ENCODE measurements at regions of chr2 and their contacts with region 1.

Region 1: GRCh38 chr2:230781130-230781797 is 68.6 kb downstream of the CAB39 start:
- DNase-seq: peak; percentile 89
- ATAC-seq: peak; percentile 88
- H3K4me3 ChIP-seq: peak overlapping the region in 1 of 2 experiments; percentile 44; a peak in 3 of 4 replicates
- H3K27ac ChIP-seq: peak overlapping the region; percentile 69
- H3K4me1 ChIP-seq: peaks cover 66 to 94% of the 10 kb centered on the region in 2 experiments
- H3K27me3 ChIP-seq: no peaks in the 10 kb centered on the region
- CTCF ChIP-seq: no peak
- POLR2A ChIP-seq: no peak
- RAD21 ChIP-seq: no peak

Region 2: DNA sequence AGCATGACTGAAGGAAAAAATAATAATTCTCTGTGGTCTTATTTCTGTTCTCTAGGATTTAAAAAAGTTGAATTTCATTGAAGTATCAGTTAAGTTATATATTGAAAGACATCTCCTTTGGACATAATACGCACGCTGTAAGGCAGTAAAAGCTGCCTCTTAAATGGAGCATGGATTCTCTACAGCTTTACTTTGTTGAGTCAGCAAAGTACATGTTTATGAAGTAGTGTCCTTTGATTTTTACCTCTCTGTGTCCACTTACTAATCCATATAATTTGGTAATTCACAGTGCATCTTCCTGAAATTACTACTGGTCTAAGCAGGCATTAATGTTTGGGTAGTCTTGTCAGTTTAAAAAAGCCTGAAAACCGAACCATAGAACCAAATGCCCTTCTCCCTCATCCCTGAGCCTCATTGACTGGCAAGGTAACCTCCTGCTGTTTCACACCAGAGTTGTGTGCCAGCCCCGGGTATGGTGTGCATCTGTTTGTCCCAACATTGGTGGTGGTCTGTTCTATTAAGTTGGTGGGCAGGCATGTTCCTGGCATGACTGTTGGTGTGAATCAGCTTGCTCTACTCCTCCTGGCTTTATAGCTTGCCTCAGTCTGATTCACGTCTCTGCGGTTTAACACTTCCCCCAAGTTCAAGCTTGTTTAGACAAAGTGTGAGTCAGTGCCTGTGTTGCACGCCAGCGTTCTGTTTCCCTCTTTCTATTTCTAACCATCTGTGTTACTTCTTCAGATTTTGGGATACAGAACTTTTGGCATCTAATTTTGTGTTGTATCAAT is 12.5 kb after region 1 on chr2:
- CTCF ChIA-PET with region 1: interaction called, 7 read pairs
- POLR2A ChIA-PET with region 1: interaction called, 18 read pairs
- RAD21 ChIA-PET with region 1: interaction called in 1 of 2 experiments, 4 read pairs
- intact Hi-C with region 1: loop called (anchors 2 kb)
- DNase-seq: peak; percentile 95
- ATAC-seq: peak; percentile 94
- H3K4me3 ChIP-seq: peak overlapping the region; percentile 3 to 34; a peak in 2 of 4 replicates
- H3K27ac ChIP-seq: peak overlapping the region; percentile 88
- H3K4me1 ChIP-seq: peaks cover 43 to 78% of the 10 kb centered on the region in 2 experiments
- H3K27me3 ChIP-seq: no peaks in the 10 kb centered on the region
- CTCF ChIP-seq: no peak
- POLR2A ChIP-seq: no peak
- RAD21 ChIP-seq: 0 out of 2 replicates have a peak, but pooled peaks have one; percentile 33